Activated CD4-positive, alpha-beta memory T cell treated with anti-CD3 and anti-CD28 coated beads for 36 hours (primary cell): ENCODE measurements at regions of chr1 and their contacts with region 1.

Region 1: GRCh38 chr1:50332941-50333594 is 90.2 kb downstream of the DMRTA2 start:
- DNase-seq: peak; percentile 61
- H3K4me3 Mint-ChIP-seq: peak overlapping the region; percentile 41
- H3K27ac Mint-ChIP-seq: no peak overlapping the region
- H3K4me1 Mint-ChIP-seq: peaks cover 3% of the 10 kb centered on the region
- H3K27me3 Mint-ChIP-seq: peaks cover 37% of the 10 kb centered on the region

Region 2: GRCh38 chr1:50343323-50343722 is 10.3 kb after region 1 on chr1:
- CTCF ChIA-PET with region 1: interaction called, 44 read pairs
- POLR2A ChIA-PET with region 1: no interaction called
- intact Hi-C with region 1: no loop called
- DNase-seq: no peak
- H3K4me3 Mint-ChIP-seq: no peak overlapping the region
- H3K27ac Mint-ChIP-seq: no peak overlapping the region
- H3K4me1 Mint-ChIP-seq: no peaks in the 10 kb centered on the region
- H3K27me3 Mint-ChIP-seq: peaks cover 15% of the 10 kb centered on the region

Region 3: GRCh38 chr1:50348449-50349241 is 15.6 kb after region 1 on chr1:
- CTCF ChIA-PET with region 1: interaction called, 44 read pairs
- POLR2A ChIA-PET with region 1: no interaction called
- intact Hi-C with region 1: no loop called
- DNase-seq: peak; percentile 38
- H3K4me3 Mint-ChIP-seq: no peak overlapping the region
- H3K27ac Mint-ChIP-seq: no peak overlapping the region
- H3K4me1 Mint-ChIP-seq: no peaks in the 10 kb centered on the region
- H3K27me3 Mint-ChIP-seq: peaks cover 16% of the 10 kb centered on the region

Region 4: DNA sequence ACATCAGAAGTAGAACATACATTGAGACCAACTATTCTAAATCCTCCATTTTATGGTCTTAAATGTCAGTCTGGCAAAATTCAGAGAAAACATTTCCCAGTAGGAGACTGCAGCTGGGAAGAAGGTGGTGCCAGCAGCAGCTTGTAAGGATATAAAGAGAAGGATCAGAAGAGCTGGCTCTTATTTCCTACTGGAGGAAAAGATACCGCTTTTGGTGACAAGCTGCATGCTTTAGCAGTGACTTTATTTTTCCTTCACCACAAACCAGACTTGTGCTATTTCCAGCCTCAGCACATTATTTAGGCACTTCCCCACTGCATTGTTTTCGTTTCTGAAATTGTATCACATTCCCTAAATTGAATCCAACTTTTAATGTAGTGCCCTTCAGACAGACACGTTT is 931.4 kb after region 1 on chr1:
- CTCF ChIA-PET with region 1: no interaction called
- POLR2A ChIA-PET with region 1: no interaction called
- intact Hi-C with region 1: no loop called
- DNase-seq: no peak
- H3K4me3 Mint-ChIP-seq: no peak overlapping the region
- H3K27ac Mint-ChIP-seq: no peak overlapping the region
- H3K4me1 Mint-ChIP-seq: peaks cover 67% of the 10 kb centered on the region
- H3K27me3 Mint-ChIP-seq: no peaks in the 10 kb centered on the region